Endothelial cell of umbilical vein (primary cell): ENCODE measurements at regions of chr22 and their contacts with region 1.

Region 1: GRCh38 chr22:25110846-25111578 is 88.6 kb upstream of the CRYBB3 start:
- DNase-seq: peak; percentile 96
- H3K4me3 ChIP-seq: peak overlapping the region in 2 of 3 experiments; percentile 27 to 61
- H3K27ac ChIP-seq: peak overlapping the region; percentile 83
- H3K4me1 ChIP-seq: peaks cover 42% of the 10 kb centered on the region
- H3K27me3 ChIP-seq: no peaks in the 10 kb centered on the region
- CTCF ChIP-seq: peak; percentile 45 to 77
- POLR2A ChIP-seq: no peak

Region 2: DNA sequence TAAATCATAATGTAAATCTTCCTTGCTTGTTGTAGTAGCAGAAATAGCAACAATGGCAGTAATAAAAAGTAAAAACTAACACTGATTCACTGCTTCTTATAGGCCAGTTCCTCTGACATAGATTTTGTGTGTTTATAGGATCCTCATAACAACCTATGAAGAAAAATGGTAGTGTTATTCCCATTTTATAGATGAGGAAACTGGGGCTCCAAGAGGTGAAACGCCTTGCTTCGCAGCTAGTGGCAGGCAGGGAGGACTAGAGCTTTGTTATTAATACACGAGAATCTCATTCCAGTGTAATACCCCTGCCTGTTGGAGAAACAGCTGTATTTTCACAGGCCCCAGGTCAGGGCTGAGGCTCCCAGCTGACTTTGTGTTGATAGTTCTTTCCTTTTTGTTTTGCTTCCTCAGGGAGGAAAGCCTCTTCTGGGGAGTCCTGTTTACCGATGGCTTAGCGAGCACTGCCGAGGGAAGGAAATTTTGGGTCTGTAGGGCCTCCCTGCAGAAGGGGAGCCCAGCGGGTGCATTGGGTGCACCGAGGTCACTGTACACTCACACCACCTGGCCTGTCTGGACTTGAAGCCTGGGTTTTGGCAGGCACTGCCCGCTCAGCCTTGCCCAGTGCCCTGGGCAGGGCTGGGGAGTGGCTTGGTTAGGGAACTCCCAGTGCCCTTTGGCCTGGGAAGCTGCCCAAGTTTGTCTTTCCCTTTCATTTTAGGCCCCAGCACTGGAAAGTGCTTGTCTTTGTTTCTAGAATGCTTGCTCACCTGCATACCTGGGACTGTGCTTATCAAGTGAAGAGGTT is 145.0 kb before region 1 on chr22:
- CTCF ChIA-PET with region 1: no interaction called
- POLR2A ChIA-PET with region 1: no interaction called
- dilution Hi-C with region 1: no loop called
- intact Hi-C with region 1: no loop called
- DNase-seq: peak; percentile 65
- H3K4me3 ChIP-seq: no peak overlapping the region
- H3K27ac ChIP-seq: peak overlapping the region; percentile 9
- H3K4me1 ChIP-seq: peaks cover 44% of the 10 kb centered on the region
- H3K27me3 ChIP-seq: no peaks in the 10 kb centered on the region
- CTCF ChIP-seq: no peak
- POLR2A ChIP-seq: no peak

Region 3: GRCh38 chr22:24985826-24986214 is 125.2 kb before region 1 on chr22:
- CTCF ChIA-PET with region 1: no interaction called
- POLR2A ChIA-PET with region 1: no interaction called
- dilution Hi-C with region 1: no loop called
- intact Hi-C with region 1: loop called (anchors 5 kb)
- DNase-seq: peak; percentile 99
- H3K4me3 ChIP-seq: no peak overlapping the region
- H3K27ac ChIP-seq: peak overlapping the region; percentile 88
- H3K4me1 ChIP-seq: peaks cover 66% of the 10 kb centered on the region
- H3K27me3 ChIP-seq: no peaks in the 10 kb centered on the region
- CTCF ChIP-seq: no peak
- POLR2A ChIP-seq: peak; percentile 89

Region 4: DNA sequence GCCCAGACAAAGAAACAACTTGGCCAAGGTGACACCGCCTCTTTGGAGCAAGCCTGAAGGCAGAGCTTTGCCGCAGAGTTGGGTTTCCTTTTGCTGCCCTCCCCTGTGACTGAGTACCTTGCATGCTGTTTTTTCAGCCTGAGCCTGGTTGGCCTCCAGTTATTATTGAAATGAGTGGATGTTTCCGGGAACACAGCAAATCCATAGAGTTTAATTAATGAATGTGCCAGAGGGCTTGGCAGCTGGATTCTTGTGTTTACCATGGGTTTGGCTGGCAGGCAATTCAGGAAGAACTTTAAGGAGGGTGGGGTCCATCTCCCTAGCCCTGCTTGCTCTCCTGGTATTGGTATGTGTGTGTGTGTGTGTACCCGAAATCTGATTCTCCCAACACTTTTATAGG is 23.0 kb after region 1 on chr22:
- CTCF ChIA-PET with region 1: interaction called, 6 read pairs
- POLR2A ChIA-PET with region 1: no interaction called
- dilution Hi-C with region 1: no loop called
- intact Hi-C with region 1: loop called (anchors 1 kb)
- DNase-seq: peak; percentile 95
- H3K4me3 ChIP-seq: no peak overlapping the region
- H3K27ac ChIP-seq: peak overlapping the region; percentile 36
- H3K4me1 ChIP-seq: peaks cover 23% of the 10 kb centered on the region
- H3K27me3 ChIP-seq: no peaks in the 10 kb centered on the region
- CTCF ChIP-seq: no peak
- POLR2A ChIP-seq: peak; percentile 61

Region 5: DNA sequence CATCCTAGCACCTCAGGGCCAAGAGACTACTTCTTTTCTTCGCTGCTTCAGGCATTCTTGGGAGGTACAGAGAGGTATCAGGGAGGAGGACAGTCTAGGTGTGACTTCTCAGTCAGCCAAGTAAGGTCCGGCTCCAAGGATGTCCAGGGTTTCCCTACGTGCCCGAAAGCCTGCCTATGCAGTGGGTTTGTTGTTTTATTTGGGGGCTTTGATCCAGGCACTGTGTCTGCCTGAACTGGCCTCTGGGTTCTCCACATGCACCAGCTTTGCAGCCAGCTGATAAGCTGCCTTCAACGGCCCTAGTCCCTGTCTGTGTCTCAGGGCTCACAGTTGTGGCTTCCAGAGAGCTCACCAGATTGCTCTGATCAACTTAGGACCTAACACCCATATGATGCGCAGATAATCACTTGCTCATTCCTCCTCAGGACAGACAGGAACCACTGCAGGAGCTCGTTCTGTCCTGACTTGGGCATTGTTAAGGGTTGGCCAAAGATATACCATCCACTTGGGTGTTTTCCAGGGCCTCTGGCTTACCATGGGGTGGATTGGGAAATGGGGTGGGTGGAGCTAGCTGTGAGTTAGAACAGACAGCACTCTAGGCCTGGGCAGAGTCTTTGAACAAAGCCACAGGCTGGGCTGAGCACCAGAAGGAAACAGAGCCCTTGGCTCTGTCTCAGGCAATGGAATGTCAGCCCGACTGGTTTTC is 43.1 kb after region 1 on chr22:
- CTCF ChIA-PET with region 1: interaction called, 22 read pairs
- POLR2A ChIA-PET with region 1: no interaction called
- dilution Hi-C with region 1: no loop called
- intact Hi-C with region 1: no loop called
- DNase-seq: peak; percentile 55
- H3K4me3 ChIP-seq: no peak overlapping the region
- H3K27ac ChIP-seq: no peak overlapping the region
- H3K4me1 ChIP-seq: peaks cover 3% of the 10 kb centered on the region
- H3K27me3 ChIP-seq: no peaks in the 10 kb centered on the region
- CTCF ChIP-seq: no peak
- POLR2A ChIP-seq: no peak

Region 6: GRCh38 chr22:25172153-25172552 is 61.1 kb after region 1 on chr22:
- CTCF ChIA-PET with region 1: interaction called, 8 read pairs
- POLR2A ChIA-PET with region 1: no interaction called
- dilution Hi-C with region 1: no loop called
- intact Hi-C with region 1: loop called (anchors 1 kb)
- DNase-seq: peak; percentile 52
- H3K4me3 ChIP-seq: no peak overlapping the region
- H3K27ac ChIP-seq: no peak overlapping the region
- H3K4me1 ChIP-seq: no peaks in the 10 kb centered on the region
- H3K27me3 ChIP-seq: no peaks in the 10 kb centered on the region
- CTCF ChIP-seq: peak; percentile 20 to 66
- POLR2A ChIP-seq: no peak

Region 7: GRCh38 chr22:25419237-25420113 is 308.5 kb after region 1 on chr22:
- CTCF ChIA-PET with region 1: no interaction called
- POLR2A ChIA-PET with region 1: no interaction called
- dilution Hi-C with region 1: no loop called
- intact Hi-C with region 1: no loop called
- DNase-seq: peak; percentile 70
- H3K4me3 ChIP-seq: no peak overlapping the region
- H3K27ac ChIP-seq: no peak overlapping the region
- H3K4me1 ChIP-seq: no peaks in the 10 kb centered on the region
- H3K27me3 ChIP-seq: peaks cover 42 to 54% of the 10 kb centered on the region in 2 experiments
- CTCF ChIP-seq: no peak
- POLR2A ChIP-seq: no peak